CD14-positive monocyte (primary cell): ENCODE measurements at regions of chr16 and their contacts with region 1.

Region 1: DNA sequence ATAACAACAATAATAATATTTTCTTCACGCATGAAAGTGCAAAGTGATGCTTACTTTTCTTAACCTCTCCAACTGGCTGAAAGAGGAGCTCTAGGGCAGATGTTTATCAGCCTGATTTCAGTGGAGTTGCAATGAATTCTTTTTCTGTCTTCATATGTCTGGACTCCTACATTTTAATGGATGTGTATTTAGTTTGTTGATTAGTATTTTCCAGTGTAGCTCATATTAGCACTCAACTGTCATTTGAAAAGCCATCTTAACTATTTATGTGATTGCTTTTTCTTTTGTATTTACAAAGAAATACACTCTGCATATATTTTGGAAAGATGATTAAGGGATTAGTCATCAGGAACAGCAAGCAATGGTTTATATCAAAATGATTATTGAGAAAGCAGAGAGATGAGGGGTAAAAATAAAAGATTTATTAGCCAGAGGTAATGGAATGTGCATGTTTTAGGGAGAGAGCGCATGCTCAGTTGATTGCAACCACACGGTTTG is 71.0 kb downstream of the WWOX start:
- DNase-seq: no peak
- H3K4me3 ChIP-seq: no peak overlapping the region
- H3K4me3 Mint-ChIP-seq: no peak overlapping the region
- H3K27ac ChIP-seq: no peak overlapping the region
- H3K27ac Mint-ChIP-seq: no peak overlapping the region
- H3K4me1 ChIP-seq: no peaks in the 10 kb centered on the region
- H3K4me1 Mint-ChIP-seq: no peaks in the 10 kb centered on the region
- H3K27me3 ChIP-seq: no peaks in the 10 kb centered on the region
- H3K27me3 Mint-ChIP-seq: peaks cover 0 to 2% (median 0%) of the 10 kb centered on the region in 3 donors
- CTCF ChIP-seq: no peak

Region 2: GRCh38 chr16:78184238-78185183 is 14.0 kb after region 1 on chr16:
- intact Hi-C with region 1: no loop called
- DNase-seq: no peak
- H3K4me3 ChIP-seq: no peak overlapping the region
- H3K4me3 Mint-ChIP-seq: no peak overlapping the region
- H3K27ac ChIP-seq: no peak overlapping the region
- H3K27ac Mint-ChIP-seq: no peak overlapping the region
- H3K4me1 ChIP-seq: no peaks in the 10 kb centered on the region
- H3K4me1 Mint-ChIP-seq: no peaks in the 10 kb centered on the region
- H3K27me3 ChIP-seq: no peaks in the 10 kb centered on the region
- H3K27me3 Mint-ChIP-seq: no peaks in the 10 kb centered on the region
- CTCF ChIP-seq: no peak

Region 3: DNA sequence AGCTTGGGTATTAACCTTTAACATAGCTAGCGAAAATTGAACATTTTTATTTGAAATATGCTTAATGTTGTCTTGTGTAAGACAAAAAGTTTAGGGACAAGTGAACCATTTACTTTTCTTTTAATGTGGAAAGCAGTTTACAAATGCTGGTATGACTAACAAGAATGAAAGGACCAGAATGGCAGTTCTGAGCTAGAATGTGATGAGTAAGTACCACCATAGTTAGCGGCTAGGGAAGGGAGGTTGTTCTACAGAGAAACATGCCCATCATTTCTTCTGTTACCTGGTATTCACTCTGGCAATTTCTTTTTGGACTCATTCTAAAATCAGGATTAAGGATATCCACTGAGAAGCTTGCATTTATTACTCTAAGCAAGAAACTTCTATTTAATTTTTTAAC is 50.1 kb after region 1 on chr16:
- intact Hi-C with region 1: loop called in 1 of 2 experiments (anchors 5 kb)
- DNase-seq: no peak
- H3K4me3 ChIP-seq: no peak overlapping the region
- H3K4me3 Mint-ChIP-seq: no peak overlapping the region
- H3K27ac ChIP-seq: no peak overlapping the region
- H3K27ac Mint-ChIP-seq: no peak overlapping the region
- H3K4me1 ChIP-seq: no peaks in the 10 kb centered on the region
- H3K4me1 Mint-ChIP-seq: no peaks in the 10 kb centered on the region
- H3K27me3 ChIP-seq: no peaks in the 10 kb centered on the region
- H3K27me3 Mint-ChIP-seq: no peaks in the 10 kb centered on the region
- CTCF ChIP-seq: no peak